ENCODE measurements at regions of chr5 and their contacts with region 1.

Region 1: GRCh38 chr5:134004592-134005375 is at the start of gene VDAC1:
- DNase-seq: peak; percentile 58 to 88 (median 84)
- H3K4me3 ChIP-seq: peak within 1 kb of the TSS; percentile 63 to 97 (median 86)
- H3K27ac ChIP-seq: peak within 1 kb of the TSS; percentile 88 to 100 (median 98)
- H3K27me3 ChIP-seq: no peaks in the 10 kb centered on the region
- CTCF ChIP-seq: peak in 12 of 56 donors; percentile 7 to 31 (median 19)
- total RNA-seq, gene VDAC1: 104 to 278 (median 216) TPM

Region 2: GRCh38 chr5:133907075-133907474 is 97.7 kb before region 1 on chr5:
- intact Hi-C with region 1: no loop called
- DNase-seq: peak in 5 of 10 donors; percentile 32 to 96 (median 42)
- H3K4me3 ChIP-seq: no peak overlapping the region
- H3K27ac ChIP-seq: peak overlapping the region in 1 of 59 donors; percentile 18
- H3K27me3 ChIP-seq: no peaks in the 10 kb centered on the region
- CTCF ChIP-seq: no peak

Region 3: GRCh38 chr5:133968049-133968980 is 36.5 kb before region 1 on chr5 and contains the start of gene C5orf15:
- intact Hi-C with region 1: loop called in 1 of 2 experiments (anchors 2 kb)
- DNase-seq: peak; percentile 91 to 98 (median 97)
- H3K4me3 ChIP-seq: peak within 1 kb of the TSS; percentile 51 to 97 (median 90)
- H3K27ac ChIP-seq: peak within 1 kb of the TSS; percentile 67 to 97 (median 92)
- H3K27me3 ChIP-seq: no peaks in the 10 kb centered on the region
- CTCF ChIP-seq: peak in 49 of 56 donors; percentile 18 to 57 (median 44)
- total RNA-seq, gene C5orf15: 9.9 to 30.7 (median 18.7) TPM